HEK293 (cell line): ENCODE measurements at regions of chr9 and their contacts with region 1.

Region 1: GRCh38 chr9:98974994-98975712 is 31.4 kb downstream of the COL15A1 start:
- H3K4me3 ChIP-seq: no peak overlapping the region
- H3K27ac ChIP-seq: no peak overlapping the region
- H3K4me1 ChIP-seq: no peaks in the 10 kb centered on the region
- CTCF ChIP-seq: peak; percentile 85

Region 2: GRCh38 chr9:98129451-98129881 is 845.7 kb before region 1 on chr9:
- CTCF ChIA-PET with region 1: no interaction called
- POLR2A ChIA-PET with region 1: no interaction called
- H3K4me3 ChIP-seq: no peak overlapping the region
- H3K27ac ChIP-seq: no peak overlapping the region
- H3K4me1 ChIP-seq: no peaks in the 10 kb centered on the region
- CTCF ChIP-seq: no peak

Region 3: DNA sequence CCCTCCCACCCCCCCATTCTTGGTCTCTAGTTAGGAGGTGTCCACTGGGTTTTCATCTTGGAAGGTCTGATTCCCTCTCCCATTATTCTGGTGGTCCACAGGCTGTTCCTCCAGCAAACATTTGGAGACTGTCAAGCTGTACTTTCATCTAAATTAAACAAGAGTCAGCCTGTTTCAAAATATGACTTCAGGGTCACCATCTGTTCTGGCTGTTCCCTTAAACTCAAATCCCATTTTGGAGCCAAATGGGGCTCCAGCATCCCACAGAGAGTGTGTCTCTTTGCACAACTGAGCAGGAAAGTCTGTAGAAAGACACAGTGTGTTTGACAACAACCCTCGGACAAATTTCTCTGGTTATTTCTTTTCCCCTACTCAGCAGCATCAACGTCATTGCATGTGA is 11.0 kb before region 1 on chr9:
- CTCF ChIA-PET with region 1: interaction called, 12 read pairs
- POLR2A ChIA-PET with region 1: no interaction called
- H3K4me3 ChIP-seq: no peak overlapping the region
- H3K27ac ChIP-seq: no peak overlapping the region
- H3K4me1 ChIP-seq: no peaks in the 10 kb centered on the region
- CTCF ChIP-seq: no peak

Region 4: DNA sequence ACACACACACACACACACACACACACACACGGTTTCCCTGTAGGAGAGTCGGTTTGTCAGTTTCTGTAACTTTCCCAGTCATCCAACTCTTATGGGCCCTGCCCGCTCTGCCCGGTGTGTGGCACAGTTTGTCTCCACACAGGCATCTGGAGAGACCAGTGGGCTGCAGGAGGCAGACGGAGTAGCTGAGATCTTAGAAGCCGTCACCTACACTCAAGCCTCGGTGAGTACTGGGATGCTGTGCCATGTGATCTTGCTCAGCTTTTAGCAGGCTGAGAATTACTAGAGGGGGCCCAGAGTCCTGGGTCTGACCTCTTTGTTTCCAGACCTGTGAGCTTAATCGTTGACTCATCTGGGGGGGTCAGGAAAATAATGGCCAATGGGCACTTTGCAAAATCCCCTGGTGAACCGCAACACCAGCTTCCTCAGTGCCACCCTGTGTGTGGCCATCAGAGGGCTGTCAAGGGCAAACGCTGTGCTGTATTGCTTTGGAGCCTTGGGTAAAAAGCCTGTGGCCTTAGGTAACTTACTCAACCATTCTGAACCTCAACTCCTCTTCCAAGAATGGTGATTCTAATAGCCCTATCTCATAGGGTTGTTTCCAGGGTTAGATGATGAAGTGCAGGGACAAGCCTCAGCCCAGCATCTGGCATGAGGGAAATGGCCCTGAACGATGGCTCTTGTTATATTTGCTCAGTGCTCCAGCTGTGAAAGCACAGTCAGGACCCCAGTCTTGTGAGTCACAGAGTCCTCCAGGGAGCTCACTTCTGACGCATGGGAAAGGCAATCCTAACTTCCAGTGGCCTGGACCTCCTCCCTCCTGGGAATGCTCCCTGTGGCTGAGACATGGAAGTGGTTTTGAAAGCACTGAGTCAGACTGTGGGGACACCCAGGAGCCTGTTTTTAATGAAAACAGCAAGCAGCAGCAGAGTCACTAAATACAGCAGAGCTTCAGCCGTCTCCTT is 14.2 kb after region 1 on chr9:
- CTCF ChIA-PET with region 1: interaction called, 27 read pairs
- POLR2A ChIA-PET with region 1: no interaction called
- H3K4me3 ChIP-seq: no peak overlapping the region
- H3K27ac ChIP-seq: no peak overlapping the region
- H3K4me1 ChIP-seq: no peaks in the 10 kb centered on the region
- CTCF ChIP-seq: no peak